Heart right ventricle (tissue), 16 donors: ENCODE measurements at regions of chr2 and their contacts with region 1.

Region 1: DNA sequence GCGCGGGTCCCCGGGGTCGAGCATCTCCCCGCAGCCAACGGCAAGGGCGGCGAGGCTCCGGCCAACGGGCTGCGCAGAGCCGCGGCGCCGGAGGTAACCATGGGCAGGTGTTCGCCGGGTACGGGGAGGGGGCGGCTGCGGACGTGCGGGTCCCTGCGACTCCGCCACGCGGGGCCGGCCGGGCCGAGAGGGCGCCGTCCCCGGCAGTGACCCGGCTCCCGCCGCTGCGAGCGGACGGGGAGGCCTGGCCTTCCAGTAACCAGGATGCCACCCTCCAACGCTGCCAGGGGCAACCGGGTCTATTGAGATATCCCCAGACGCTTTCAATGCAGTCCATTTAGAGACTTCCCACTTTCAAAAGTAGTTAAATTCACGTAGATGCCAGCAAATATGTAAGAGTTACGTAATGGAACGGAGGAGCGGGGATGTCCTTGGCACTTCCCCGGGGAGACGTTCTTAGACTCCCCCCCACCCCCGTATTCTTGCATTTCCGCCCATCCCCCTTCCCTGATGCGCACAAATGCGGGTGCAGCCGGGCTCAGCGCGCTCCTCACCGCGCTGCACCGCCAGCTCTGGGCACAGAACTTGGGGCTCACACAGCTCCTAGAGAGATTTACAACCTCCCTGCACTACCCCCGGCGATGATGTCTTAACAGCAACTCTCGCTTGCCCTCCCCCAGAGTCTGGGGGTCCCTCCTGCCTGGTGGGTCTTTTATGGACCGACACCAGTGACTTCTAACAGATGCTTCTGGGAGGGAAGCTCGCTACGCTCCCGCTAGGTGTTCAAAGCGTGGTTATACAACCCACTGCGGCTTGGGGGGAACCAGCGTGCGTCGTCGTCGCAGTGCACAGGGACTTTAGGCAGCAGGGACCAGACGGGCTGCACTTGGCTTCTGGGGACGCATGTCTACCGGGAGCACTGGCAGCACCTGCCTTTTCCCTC is 657 bp downstream of the SGPP2 start:
- DNase-seq: peak in 1 of 2 donors; percentile 10
- ATAC-seq: peak in 7 of 8 donors; percentile 34 to 79 (median 42)
- H3K4me3 ChIP-seq: peak overlapping the region; percentile 44 to 70 (median 56)
- H3K27ac ChIP-seq: peak overlapping the region in 5 of 10 donors; percentile 10 to 65 (median 42)
- H3K4me1 ChIP-seq: peaks cover 0 to 24% (median 3%) of the 10 kb centered on the region in 9 donors
- H3K27me3 ChIP-seq: peaks cover 0 to 52% (median 39%) of the 10 kb centered on the region in 7 donors
- CTCF ChIP-seq: no peak

Region 2: GRCh38 chr2:222399038-222399783 is 25.8 kb before region 1 on chr2:
- intact Hi-C with region 1: loop called in 1 of 10 experiments (anchors 1 kb)
- DNase-seq: peak in 1 of 2 donors; percentile 14
- ATAC-seq: peak; percentile 65 to 95 (median 89)
- H3K4me3 ChIP-seq: peak overlapping the region in 1 of 10 donors; percentile 4
- H3K27ac ChIP-seq: peak overlapping the region in 7 of 10 donors; percentile 50 to 74 (median 65)
- H3K4me1 ChIP-seq: peaks cover 0 to 9% (median 0%) of the 10 kb centered on the region in 9 donors
- H3K27me3 ChIP-seq: no peaks in the 10 kb centered on the region
- CTCF ChIP-seq: no peak

Region 3: GRCh38 chr2:222604749-222605515 is 179.9 kb after region 1 on chr2:
- intact Hi-C with region 1: no loop called
- DNase-seq: no peak
- ATAC-seq: no peak
- H3K4me3 ChIP-seq: no peak overlapping the region
- H3K27ac ChIP-seq: no peak overlapping the region
- H3K4me1 ChIP-seq: peaks cover 0 to 6% (median 0%) of the 10 kb centered on the region in 9 donors
- H3K27me3 ChIP-seq: no peaks in the 10 kb centered on the region
- CTCF ChIP-seq: no peak